Posterior vena cava (tissue), 2 donors: ENCODE measurements at regions of chr6 and their contacts with region 1.

Region 1: DNA sequence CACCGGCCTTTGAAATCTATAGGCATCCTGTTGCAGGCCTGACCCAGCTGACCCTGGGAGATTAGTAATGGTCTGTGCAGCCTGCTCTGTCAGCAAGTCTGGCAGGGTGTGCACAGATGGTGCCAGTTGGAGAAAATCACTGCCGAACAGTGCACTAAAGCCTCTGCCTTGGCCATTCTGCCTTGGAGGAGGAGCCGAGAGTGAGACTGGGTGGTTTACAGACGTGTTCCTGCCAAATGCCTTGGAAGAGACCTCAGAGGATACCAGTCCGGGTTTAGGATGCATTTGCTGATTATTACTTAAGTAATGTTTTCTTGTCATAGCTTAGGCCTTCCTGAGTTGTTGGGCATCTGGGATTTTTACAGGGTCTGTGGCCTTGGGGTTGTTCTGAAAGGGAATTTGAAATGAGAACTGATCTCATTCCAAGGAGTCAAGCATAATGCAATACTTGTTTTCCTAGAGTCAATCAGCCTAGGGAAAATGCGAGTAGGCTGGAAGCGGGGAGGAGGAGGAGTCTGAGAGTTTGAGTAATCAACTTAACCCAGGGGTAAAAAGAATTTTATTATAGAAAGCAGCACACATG is 292.1 kb downstream of the SOX4 start:
- DNase-seq: peak; percentile 88

Region 2: DNA sequence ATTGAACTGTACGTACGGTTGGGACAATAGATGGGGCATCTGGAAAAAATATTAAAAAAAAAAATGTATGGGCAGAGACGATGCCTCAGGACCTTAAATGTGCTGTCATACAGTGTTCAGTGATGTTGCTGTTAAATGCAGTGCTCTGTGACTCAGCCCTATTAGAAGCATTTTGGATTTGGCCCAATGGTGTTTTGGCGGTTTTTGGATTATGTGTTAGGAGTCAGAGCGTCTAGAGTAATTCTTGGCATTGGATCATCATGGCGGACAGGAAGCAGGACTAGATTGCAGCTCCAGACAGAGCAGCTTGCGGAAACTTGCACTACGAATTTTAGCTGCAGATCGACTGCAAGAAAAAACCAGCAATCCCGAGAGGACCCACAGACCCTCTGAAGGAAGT is 12.1 kb before region 1 on chr6:
- intact Hi-C with region 1: loop called in 1 of 2 experiments (anchors 1 kb)
- DNase-seq: no peak